ENCODE measurements at regions of chr13 and their contacts with region 1.

Region 1: GRCh38 chr13:25001476-25002206 is 94.3 kb upstream of the PABPC3 start:
- DNase-seq: no peak
- H3K4me3 ChIP-seq: no peak overlapping the region; a peak in 1 of 4 replicates
- H3K27ac ChIP-seq: no peak overlapping the region
- H3K4me1 ChIP-seq: no peaks in the 10 kb centered on the region
- H3K27me3 ChIP-seq: no peaks in the 10 kb centered on the region; the same call in 1 of the 2 replicates
- CTCF ChIP-seq: no peak
- EP300 ChIP-seq: no peak
- RAD21 ChIP-seq: no peak

Region 2: DNA sequence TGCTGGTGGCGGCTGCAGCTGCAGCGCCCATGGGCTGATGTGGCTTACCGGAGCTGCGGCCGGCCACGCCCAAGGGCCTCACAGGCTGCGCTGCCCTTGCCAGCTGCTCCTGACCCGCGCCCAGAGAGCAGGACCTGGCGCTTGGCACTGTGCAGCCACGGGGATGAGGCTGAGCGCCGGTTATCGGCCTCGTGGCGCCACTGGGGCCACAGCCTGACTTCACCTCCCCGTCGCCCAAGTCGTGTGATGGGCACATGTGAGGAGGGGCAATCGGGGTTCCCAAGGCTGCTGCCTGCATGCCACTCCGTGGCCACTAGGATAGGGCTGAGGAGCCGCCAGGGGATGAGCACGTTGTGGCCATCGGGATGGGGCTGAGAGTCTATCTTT is 17.1 kb after region 1 on chr13:
- CTCF ChIA-PET with region 1: interaction called, 10 read pairs
- POLR2A ChIA-PET with region 1: no interaction called
- DNase-seq: no peak
- H3K4me3 ChIP-seq: no peak overlapping the region
- H3K27ac ChIP-seq: no peak overlapping the region
- H3K4me1 ChIP-seq: no peaks in the 10 kb centered on the region
- H3K27me3 ChIP-seq: peaks cover 9% of the 10 kb centered on the region; the same call in 1 of the 2 replicates
- CTCF ChIP-seq: no peak
- EP300 ChIP-seq: no peak
- RAD21 ChIP-seq: no peak

Region 3: DNA sequence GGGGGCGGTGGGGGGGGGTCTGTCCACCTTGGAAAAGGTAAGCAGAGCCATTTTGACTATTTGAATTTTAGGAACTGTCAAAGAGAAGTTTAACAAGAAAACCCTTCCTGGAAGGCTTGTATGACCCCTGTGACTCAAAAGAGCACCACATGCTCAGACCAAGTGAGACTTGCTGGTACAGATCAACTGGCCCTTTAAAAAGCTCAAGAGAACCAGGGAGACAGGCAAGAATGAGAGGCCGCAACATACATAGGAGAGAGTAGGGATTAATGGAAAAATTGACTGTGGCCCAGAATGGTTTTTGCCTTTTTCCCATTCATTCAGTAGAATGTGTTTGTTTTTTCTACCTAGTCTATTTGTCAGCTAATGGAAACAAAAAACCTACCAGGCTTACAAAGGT is 343.9 kb after region 1 on chr13:
- CTCF ChIA-PET with region 1: no interaction called
- POLR2A ChIA-PET with region 1: no interaction called
- DNase-seq: no peak
- H3K4me3 ChIP-seq: no peak overlapping the region
- H3K27ac ChIP-seq: no peak overlapping the region
- H3K4me1 ChIP-seq: no peaks in the 10 kb centered on the region
- H3K27me3 ChIP-seq: no peaks in the 10 kb centered on the region
- CTCF ChIP-seq: no peak
- EP300 ChIP-seq: no peak
- RAD21 ChIP-seq: no peak